ENCODE measurements at regions of chr5 and their contacts with region 1.

Region 1: DNA sequence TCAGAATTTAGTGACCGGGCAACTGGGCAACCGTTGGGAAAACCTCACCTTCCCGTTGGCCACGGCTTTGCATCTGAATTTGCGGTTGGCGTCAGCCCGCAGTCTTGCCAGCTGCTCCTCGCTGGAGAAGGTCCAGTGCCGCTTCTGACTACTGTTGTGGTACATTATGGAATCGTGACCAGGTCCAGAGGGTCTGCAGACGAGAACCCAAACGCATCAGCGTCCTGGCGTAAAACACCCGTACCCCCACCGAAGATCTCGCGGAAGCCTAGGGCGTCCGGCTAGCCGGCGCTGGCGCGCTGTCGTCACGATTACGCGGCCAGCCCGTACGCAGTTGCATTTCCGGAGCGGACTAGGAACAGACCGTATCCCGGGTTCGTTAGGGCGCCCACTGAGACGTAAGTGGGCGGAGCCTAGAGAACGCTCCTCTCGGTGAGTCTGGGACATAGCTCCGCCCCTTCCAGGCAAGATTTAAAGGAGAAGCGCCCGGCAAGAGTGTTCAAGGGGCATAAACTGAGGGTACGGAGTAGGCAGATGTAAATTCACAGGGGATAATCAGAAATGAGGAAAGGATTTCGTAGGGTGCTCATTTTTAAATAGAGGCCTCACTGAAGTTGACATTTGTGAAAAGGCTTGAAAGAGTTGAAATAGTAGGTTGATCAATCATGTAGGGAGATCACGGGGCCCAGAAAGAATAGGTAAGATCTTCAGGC is at the start of gene CCNH:
- DNase-seq: peak; percentile 90
- ATAC-seq: peak; percentile 99
- H3K4me3 Mint-ChIP-seq: peak within 1 kb of the TSS; percentile 91
- H3K27ac Mint-ChIP-seq: peak within 1 kb of the TSS; percentile 93
- H3K4me1 Mint-ChIP-seq: peaks cover 36% of the 10 kb centered on the region
- H3K27me3 Mint-ChIP-seq: no peaks in the 10 kb centered on the region
- CTCF ChIP-seq: no peak
- total RNA-seq, gene CCNH: 69.3 and 74.8 TPM in 2 replicates

Region 2: GRCh38 chr5:86894006-86894560 is 518.7 kb before region 1 on chr5:
- CTCF ChIA-PET with region 1: no interaction called
- POLR2A ChIA-PET with region 1: no interaction called
- intact Hi-C with region 1: no loop called
- DNase-seq: no peak
- ATAC-seq: no peak
- H3K4me3 Mint-ChIP-seq: no peak overlapping the region
- H3K27ac Mint-ChIP-seq: no peak overlapping the region
- H3K4me1 Mint-ChIP-seq: no peaks in the 10 kb centered on the region
- H3K27me3 Mint-ChIP-seq: no peaks in the 10 kb centered on the region
- CTCF ChIP-seq: no peak

Region 3: DNA sequence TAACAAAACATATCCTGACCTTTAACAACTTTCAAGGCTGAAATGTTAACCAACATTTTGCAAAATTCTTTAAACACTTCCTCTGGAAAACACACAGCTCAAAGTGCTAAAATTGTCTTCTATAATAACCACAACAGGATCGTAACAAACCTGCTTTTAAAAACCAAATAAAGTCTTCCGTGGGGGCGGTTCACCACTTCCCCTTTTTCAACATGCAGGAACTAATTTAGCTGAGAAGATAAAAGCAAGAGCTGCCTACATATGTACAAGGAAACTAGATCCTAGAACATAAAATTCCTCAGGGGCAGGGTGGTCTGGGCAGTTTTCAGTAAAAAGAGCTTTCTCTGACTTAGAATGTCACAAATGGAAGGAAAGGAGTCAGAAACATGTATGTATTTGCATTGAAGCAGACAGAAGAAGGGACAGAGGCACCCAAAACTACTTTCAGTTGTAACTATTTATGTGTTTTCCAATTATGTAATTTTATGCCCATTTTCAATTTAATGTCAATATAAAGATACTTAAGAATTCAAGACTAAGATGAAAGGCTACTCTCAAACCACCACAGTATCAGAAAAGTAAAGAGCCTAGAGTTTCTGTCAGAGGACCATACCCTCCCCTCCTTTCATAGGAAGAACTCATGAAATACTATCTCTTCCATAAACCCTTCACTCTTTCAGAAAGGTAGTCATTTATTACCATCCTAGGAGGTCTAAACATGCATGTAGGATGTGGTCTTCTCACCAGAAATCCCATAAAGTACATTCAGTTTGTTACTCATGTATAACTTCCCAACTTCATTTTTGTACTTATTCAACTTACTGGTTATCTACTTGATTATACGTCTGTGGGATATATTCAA is 331.0 kb before region 1 on chr5:
- CTCF ChIA-PET with region 1: no interaction called
- POLR2A ChIA-PET with region 1: no interaction called
- intact Hi-C with region 1: loop called (anchors 1 kb)
- DNase-seq: no peak
- ATAC-seq: peak; percentile 90
- H3K4me3 Mint-ChIP-seq: peak overlapping the region; percentile 79
- H3K27ac Mint-ChIP-seq: peak overlapping the region; percentile 97
- H3K4me1 Mint-ChIP-seq: peaks cover 57% of the 10 kb centered on the region
- H3K27me3 Mint-ChIP-seq: no peaks in the 10 kb centered on the region
- CTCF ChIP-seq: no peak

Region 4: DNA sequence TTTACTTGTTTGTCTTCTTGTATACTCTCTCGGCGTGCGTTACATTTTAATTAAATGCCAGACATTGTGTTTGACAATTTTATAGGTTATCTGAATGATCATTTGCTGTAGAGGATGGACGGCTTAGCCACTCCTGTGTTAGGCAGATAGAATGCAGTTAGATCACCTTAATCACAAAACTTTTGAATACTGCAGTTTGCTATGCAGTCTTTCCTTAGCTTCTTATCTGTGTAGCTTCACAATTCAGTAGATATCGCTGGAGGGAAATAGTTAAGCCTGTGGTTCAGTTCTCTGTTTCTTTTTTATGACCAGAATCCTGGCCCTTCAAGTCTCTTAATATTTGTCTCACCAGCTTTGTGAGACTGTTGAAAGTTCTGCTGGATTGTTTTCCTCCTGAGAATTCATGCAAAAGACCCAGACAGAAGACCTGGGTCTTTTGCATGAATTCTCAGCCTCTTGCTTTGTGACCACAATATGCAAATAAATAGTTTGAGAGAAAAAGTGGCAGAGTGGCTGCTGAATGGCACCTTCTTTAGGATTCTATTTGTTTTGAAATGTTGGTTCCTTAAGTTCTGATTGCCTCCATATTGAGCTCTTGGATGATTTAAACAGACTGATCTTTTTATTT is 104.9 kb before region 1 on chr5:
- CTCF ChIA-PET with region 1: no interaction called
- POLR2A ChIA-PET with region 1: no interaction called
- intact Hi-C with region 1: loop called (anchors 5 kb)
- DNase-seq: no peak
- ATAC-seq: peak; percentile 91
- H3K4me3 Mint-ChIP-seq: peak overlapping the region; percentile 5
- H3K27ac Mint-ChIP-seq: no peak overlapping the region
- H3K4me1 Mint-ChIP-seq: peaks cover 47% of the 10 kb centered on the region
- H3K27me3 Mint-ChIP-seq: no peaks in the 10 kb centered on the region
- CTCF ChIP-seq: no peak

Region 5: DNA sequence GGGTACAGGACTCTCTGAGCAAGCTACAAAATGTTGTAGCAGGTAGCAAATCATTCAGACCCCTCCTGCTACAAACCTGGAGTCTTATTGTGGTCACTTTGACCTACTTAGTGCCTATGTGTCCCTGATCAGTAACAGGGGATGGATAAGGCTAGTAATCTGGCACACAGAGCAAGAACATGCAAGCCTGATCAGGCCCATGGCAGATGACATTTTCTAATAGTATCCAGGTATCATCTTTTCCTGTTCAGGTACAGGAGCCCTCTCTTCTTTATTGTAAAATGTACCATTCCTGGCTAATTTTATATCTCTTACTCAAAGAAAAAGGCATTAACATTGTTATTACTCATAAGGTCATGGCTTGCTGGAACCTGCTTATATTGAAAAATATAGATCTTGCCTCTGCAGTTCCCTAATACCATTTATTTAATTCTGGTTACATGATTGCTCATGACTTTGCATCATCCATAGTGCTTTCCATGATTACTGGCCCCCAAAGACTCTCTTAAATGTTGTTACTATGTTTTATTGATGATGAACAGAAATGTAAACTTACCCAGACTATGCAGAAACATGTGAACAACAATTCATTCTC is 18.2 kb after region 1 on chr5:
- CTCF ChIA-PET with region 1: no interaction called
- POLR2A ChIA-PET with region 1: no interaction called
- intact Hi-C with region 1: no loop called
- DNase-seq: no peak
- ATAC-seq: no peak
- H3K4me3 Mint-ChIP-seq: no peak overlapping the region
- H3K27ac Mint-ChIP-seq: no peak overlapping the region
- H3K4me1 Mint-ChIP-seq: no peaks in the 10 kb centered on the region
- H3K27me3 Mint-ChIP-seq: peaks cover 16% of the 10 kb centered on the region
- CTCF ChIP-seq: no peak

Region 6: GRCh38 chr5:87570366-87570765 is 157.6 kb after region 1 on chr5:
- CTCF ChIA-PET with region 1: no interaction called
- POLR2A ChIA-PET with region 1: no interaction called
- intact Hi-C with region 1: no loop called
- DNase-seq: no peak
- ATAC-seq: no peak
- H3K4me3 Mint-ChIP-seq: no peak overlapping the region
- H3K27ac Mint-ChIP-seq: no peak overlapping the region
- H3K4me1 Mint-ChIP-seq: no peaks in the 10 kb centered on the region
- H3K27me3 Mint-ChIP-seq: peaks cover 1% of the 10 kb centered on the region
- CTCF ChIP-seq: no peak

Region 7: DNA sequence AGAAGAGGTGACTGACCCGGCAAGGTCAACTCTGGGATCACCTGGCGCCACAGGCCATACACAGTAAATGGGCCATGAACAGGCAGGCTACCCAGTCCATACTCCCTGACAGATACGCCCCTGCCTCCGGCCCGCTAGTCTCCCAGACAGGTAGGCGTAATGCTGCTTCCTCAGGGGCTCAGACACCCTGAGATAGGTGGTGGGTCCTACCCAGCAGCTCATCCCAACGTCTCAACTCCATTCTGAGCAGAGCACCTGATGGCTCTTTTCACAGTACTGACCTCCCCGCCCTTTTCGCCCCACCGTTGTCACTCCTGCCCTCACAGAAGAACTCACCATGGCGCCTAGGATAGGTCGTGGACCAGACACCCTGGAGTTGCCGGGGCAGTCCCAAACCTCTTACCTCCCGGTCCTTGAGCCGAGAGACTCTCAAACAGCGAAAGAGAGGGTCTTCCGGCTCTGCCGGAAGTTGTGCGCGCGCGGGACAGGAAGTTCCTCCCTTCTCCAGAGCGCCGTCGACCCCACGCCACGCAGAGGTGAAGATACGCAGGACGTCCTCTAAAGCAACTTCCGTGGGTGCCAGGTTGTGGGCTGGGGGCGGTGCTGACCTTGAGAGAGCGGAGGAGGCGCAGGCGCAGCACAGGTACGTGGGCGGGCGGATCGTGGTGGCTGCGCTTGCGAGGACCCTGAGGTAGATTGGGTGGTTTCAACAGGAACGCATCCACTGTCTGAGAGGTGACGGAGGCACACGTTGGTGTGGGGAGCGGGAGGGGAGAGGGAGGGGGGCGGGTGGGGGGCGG is 855.8 kb after region 1 on chr5 and contains the start of gene TMEM161B:
- CTCF ChIA-PET with region 1: no interaction called
- POLR2A ChIA-PET with region 1: no interaction called
- intact Hi-C with region 1: loop called (anchors 1 kb)
- DNase-seq: peak; percentile 83
- ATAC-seq: peak; percentile 99
- H3K4me3 Mint-ChIP-seq: peak within 1 kb of the TSS; percentile 100
- H3K27ac Mint-ChIP-seq: peak within 1 kb of the TSS; percentile 96
- H3K4me1 Mint-ChIP-seq: peaks cover 48% of the 10 kb centered on the region
- H3K27me3 Mint-ChIP-seq: no peaks in the 10 kb centered on the region
- CTCF ChIP-seq: no peak
- total RNA-seq, gene TMEM161B: 26.4 and 31.1 TPM in 2 replicates